Left ventricle myocardium inferior (tissue), 1 donor: ENCODE measurements at regions of chr7 and their contacts with region 1.

Region 1: GRCh38 chr7:129367700-129368388 is 66.4 kb upstream of the STRIP2 start:
- DNase-seq: peak; percentile 58
- H3K4me3 ChIP-seq: peak overlapping the region; percentile 15
- H3K27ac ChIP-seq: no peak overlapping the region
- H3K4me1 ChIP-seq: peaks cover 12% of the 10 kb centered on the region
- H3K27me3 ChIP-seq: no peaks in the 10 kb centered on the region
- CTCF ChIP-seq: peak; percentile 91

Region 2: GRCh38 chr7:129227646-129228578 is 139.9 kb before region 1 on chr7:
- intact Hi-C with region 1: no loop called
- DNase-seq: no peak
- H3K4me3 ChIP-seq: no peak overlapping the region
- H3K27ac ChIP-seq: no peak overlapping the region
- H3K4me1 ChIP-seq: peaks cover 50% of the 10 kb centered on the region
- H3K27me3 ChIP-seq: no peaks in the 10 kb centered on the region
- CTCF ChIP-seq: no peak

Region 3: GRCh38 chr7:129471402-129471827 is 103.6 kb after region 1 on chr7:
- intact Hi-C with region 1: loop called (anchors 5 kb)
- DNase-seq: no peak
- H3K4me3 ChIP-seq: no peak overlapping the region
- H3K27ac ChIP-seq: no peak overlapping the region
- H3K4me1 ChIP-seq: peaks cover 10% of the 10 kb centered on the region
- H3K27me3 ChIP-seq: no peaks in the 10 kb centered on the region
- CTCF ChIP-seq: no peak

Region 4: DNA sequence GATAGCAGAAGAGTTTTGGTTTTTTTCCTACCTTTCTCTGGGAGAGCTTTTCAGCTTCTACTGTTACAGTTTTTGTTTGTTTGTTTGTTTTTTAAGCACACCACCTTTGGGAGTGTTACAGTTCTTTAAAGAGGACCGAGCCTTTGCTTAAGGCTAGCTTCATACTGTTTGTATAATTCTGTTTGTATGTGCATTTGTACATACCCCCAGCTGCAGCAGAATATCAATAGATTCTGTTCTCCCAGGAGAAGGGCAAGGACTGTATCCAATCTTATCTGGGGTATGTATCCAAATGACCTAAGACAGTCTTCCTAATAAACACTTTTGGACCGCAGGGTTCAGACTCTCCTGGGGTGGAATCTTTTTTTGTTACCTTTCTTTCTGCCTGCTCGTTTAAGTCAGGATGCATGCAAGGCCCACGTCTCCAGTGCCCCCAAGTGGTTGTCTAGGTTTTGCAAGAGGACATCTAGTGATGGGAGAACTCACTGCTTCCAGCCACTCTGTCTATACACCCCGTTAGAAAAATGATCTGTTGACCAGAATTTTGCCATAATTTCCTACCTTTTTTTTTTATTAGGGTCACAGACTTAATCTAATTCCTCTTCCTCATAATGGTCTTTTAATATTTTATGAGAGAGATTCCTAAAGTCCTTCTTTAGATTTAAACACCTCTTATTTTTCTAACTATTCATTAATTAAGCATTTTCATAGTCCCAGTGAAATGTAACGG is 267.6 kb after region 1 on chr7:
- intact Hi-C with region 1: loop called (anchors 10 kb)
- DNase-seq: peak; percentile 29
- H3K4me3 ChIP-seq: no peak overlapping the region
- H3K27ac ChIP-seq: no peak overlapping the region
- H3K4me1 ChIP-seq: peaks cover 28% of the 10 kb centered on the region
- H3K27me3 ChIP-seq: no peaks in the 10 kb centered on the region
- CTCF ChIP-seq: peak; percentile 80